Activated naive CD4-positive, alpha-beta T cell treated with anti-CD3 and anti-CD28 coated beads for 36 hours (primary cell): ENCODE measurements at regions of chr10 and their contacts with region 1.

Region 1: DNA sequence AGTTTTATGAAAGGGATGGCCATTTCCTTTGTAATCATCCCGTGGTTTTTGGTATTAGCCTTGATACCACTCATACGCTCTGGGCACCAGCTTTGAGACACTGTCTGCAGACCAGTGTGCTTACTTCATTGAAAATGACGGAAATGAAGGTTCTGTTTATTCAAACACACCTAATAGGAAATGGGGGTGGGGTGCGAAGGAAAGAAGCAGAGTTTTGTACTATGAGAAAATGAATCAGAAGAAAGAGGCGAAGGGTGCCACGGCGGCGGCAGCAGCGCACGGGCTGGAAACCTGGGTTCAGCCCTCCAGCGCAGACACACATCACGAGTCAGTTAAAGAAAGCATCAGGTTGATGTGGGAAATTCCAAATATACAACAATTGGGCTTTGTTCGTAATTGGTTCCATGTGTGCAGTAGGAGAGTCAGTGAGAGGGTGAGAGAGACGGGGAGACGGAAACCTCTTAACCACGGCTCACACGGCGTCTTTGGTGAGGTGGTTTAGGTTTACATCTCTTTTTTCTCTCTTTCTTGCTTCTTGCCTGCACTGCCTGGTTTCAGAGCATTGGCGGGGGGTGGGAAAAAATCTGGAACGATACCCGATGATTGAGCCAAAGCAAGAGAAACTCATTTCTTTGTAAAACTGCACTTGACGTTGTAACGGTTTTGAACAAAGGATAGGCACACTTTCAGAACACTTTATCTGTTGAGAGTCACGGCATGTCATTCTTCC is 321.2 kb downstream of the FRMD4A start:
- DNase-seq: peak; percentile 84
- H3K4me3 Mint-ChIP-seq: peak overlapping the region; percentile 79
- H3K27ac Mint-ChIP-seq: peak overlapping the region; percentile 90
- H3K4me1 Mint-ChIP-seq: peaks cover 35% of the 10 kb centered on the region
- H3K27me3 Mint-ChIP-seq: no peaks in the 10 kb centered on the region

Region 2: DNA sequence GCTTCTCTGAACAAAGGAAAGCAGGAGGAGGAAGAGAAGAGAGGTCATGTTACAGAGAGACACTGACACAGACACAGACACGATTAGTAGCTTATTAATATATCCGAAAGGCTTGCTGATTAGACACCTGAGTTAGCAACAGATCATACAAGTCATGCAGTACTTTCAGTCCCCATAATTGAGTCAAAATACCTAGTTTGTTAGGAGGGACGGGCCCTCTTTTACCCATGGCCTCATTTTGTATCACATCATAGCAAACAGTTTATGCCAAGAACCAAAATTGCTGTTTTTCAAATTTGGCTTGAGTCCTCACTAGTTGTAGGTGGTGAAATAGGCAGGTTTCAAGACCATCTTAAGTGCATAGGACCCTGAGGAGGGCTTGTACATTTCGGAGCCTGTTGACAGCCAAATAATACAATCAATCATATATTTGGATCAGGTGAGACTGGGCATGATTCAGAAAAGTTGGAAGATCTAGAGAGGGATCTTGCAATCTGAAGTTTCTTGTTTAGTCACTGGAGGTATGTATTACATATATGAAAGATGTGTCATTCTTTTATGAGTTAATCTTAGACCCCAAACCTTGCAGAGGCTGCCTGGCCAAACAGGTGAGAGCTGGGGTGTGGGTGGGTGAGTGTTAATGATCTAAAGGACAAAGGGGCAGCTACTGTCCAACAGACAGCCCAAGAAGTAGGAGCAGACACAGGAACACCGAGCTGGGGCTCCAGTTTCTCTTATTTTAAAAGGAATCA is 357.4 kb before region 1 on chr10:
- CTCF ChIA-PET with region 1: no interaction called
- intact Hi-C with region 1: loop called (anchors 1 kb)
- DNase-seq: peak; percentile 33
- H3K4me3 Mint-ChIP-seq: no peak overlapping the region
- H3K27ac Mint-ChIP-seq: peak overlapping the region; percentile 19
- H3K4me1 Mint-ChIP-seq: peaks cover 19% of the 10 kb centered on the region
- H3K27me3 Mint-ChIP-seq: no peaks in the 10 kb centered on the region

Region 3: DNA sequence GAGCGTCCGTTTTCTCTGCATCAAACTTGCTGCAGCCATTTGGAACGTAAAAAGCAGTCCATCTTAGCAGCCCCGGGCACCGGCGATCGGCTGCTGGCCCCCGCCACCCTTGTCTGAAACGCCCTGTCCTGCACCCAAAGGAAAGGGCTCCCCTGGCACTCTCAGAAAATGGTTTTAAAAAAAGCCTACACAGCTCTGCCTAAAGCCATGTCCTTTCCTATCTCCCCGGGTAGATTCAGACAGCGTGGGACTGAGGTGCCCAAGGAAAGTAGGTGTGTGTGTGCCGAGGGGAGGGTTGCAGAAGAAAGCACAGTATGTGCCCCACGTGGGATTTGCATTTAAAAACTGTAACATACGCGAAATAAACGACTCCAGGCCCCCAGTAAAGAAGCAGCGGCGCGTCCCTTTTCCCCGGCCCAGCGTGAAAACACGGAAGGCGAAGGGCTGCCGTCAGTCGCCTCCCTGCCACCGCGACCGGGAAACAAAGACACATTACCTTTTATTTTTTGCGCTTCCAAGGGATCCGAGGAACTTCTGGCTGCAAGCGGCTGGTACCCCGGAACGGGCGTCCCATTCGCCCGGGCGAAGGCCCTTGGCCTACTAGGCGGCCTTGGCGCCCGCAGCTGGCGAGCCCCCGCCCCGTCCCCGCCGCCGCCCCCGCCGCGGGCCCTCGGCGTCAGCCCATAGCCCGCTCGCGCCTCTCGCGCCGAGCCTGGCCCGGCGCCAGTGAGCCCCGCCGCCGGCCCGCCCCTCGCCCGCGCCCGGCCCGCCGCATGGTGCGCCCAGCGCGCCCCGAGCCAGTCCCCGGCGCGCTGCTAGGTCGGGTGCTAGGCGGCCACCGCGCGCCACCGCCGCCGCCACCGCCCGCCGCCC is 118.2 kb before region 1 on chr10:
- CTCF ChIA-PET with region 1: no interaction called
- intact Hi-C with region 1: loop called (anchors 5 kb)
- DNase-seq: peak; percentile 10
- H3K4me3 Mint-ChIP-seq: peak overlapping the region; percentile 69
- H3K27ac Mint-ChIP-seq: no peak overlapping the region
- H3K4me1 Mint-ChIP-seq: peaks cover 20% of the 10 kb centered on the region
- H3K27me3 Mint-ChIP-seq: peaks cover 62% of the 10 kb centered on the region

Region 4: GRCh38 chr10:13969118-13969791 is 40.3 kb before region 1 on chr10:
- CTCF ChIA-PET with region 1: no interaction called
- intact Hi-C with region 1: loop called (anchors 1 kb)
- DNase-seq: no peak
- H3K4me3 Mint-ChIP-seq: no peak overlapping the region
- H3K27ac Mint-ChIP-seq: no peak overlapping the region
- H3K4me1 Mint-ChIP-seq: peaks cover 11% of the 10 kb centered on the region
- H3K27me3 Mint-ChIP-seq: peaks cover 2% of the 10 kb centered on the region

Region 5: DNA sequence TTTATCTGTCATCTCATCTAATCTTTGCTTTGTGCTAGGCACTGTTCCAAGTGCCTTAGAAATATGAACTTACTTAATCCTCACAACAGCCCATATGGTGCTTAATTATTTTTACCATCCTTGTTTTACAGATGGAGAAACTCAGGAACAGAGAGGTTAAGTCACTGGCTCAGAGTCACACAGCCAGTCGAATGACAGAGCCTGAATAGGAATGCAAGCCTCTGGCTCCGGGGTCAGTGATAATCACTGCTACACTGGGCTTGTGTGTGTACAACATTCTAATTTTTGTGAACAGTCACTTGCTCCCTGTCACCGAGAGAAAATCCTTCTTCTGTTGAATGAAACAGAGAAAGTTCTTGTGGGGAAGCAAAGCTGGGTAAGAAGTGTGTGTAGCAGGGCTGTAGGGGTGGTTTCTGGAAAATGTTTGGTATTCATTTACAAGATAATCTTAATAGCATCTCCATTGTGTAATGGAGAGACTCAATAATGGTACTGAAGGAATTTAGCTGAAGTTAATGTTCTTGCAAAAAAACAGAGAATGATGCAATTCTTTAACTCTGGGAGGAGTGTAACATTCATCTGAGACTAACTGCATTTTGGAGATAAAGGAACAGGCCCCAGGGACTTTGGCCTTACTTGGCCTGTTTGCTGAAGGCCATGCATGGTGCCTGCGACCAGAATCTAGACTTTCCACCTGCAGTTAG is 30.6 kb after region 1 on chr10:
- CTCF ChIA-PET with region 1: no interaction called
- intact Hi-C with region 1: loop called (anchors 2 kb)
- DNase-seq: no peak
- H3K4me3 Mint-ChIP-seq: no peak overlapping the region
- H3K27ac Mint-ChIP-seq: no peak overlapping the region
- H3K4me1 Mint-ChIP-seq: peaks cover 9% of the 10 kb centered on the region
- H3K27me3 Mint-ChIP-seq: no peaks in the 10 kb centered on the region

Region 6: GRCh38 chr10:14262836-14263425 is 253.4 kb after region 1 on chr10:
- CTCF ChIA-PET with region 1: no interaction called
- intact Hi-C with region 1: no loop called
- DNase-seq: no peak
- H3K4me3 Mint-ChIP-seq: no peak overlapping the region
- H3K27ac Mint-ChIP-seq: no peak overlapping the region
- H3K4me1 Mint-ChIP-seq: no peaks in the 10 kb centered on the region
- H3K27me3 Mint-ChIP-seq: peaks cover 11% of the 10 kb centered on the region